PC-9 (cell line): ENCODE measurements at regions of chr17 and their contacts with region 1.

Region 1: GRCh38 chr17:3647769-3648555 is 11.4 kb downstream of the CTNS start:
- DNase-seq: peak in 1 of 2 experiments; percentile 40
- H3K4me3 ChIP-seq: no peak overlapping the region
- H3K27ac ChIP-seq: no peak overlapping the region
- H3K4me1 ChIP-seq: no peaks in the 10 kb centered on the region
- H3K27me3 ChIP-seq: no peaks in the 10 kb centered on the region
- CTCF ChIP-seq: peak; percentile 63

Region 2: DNA sequence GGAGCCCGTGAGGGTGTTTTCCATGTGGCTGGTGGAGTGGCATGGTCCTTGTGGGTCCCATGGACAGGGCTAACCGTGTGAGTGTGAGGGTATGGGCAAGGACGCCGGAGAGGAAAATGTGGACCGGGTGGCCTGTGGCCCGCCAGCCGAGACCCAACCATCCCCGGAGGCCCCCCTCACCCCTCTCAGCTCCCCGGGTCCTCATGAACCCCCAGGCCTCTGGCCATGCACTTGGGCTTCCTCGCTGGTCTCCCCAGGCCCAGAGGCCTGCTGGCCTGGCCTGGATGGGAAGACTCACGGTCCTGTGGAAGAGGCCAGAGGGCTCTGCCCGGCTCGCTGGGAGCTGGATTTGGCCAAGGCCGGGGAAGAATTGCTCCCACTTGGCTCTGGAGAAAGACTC is 838.6 kb before region 1 on chr17:
- CTCF ChIA-PET with region 1: interaction called, 11 read pairs
- POLR2A ChIA-PET with region 1: no interaction called
- intact Hi-C with region 1: no loop called
- DNase-seq: no peak
- H3K4me3 ChIP-seq: no peak overlapping the region
- H3K27ac ChIP-seq: no peak overlapping the region
- H3K4me1 ChIP-seq: peaks cover 11% of the 10 kb centered on the region
- H3K27me3 ChIP-seq: no peaks in the 10 kb centered on the region
- CTCF ChIP-seq: no peak

Region 3: DNA sequence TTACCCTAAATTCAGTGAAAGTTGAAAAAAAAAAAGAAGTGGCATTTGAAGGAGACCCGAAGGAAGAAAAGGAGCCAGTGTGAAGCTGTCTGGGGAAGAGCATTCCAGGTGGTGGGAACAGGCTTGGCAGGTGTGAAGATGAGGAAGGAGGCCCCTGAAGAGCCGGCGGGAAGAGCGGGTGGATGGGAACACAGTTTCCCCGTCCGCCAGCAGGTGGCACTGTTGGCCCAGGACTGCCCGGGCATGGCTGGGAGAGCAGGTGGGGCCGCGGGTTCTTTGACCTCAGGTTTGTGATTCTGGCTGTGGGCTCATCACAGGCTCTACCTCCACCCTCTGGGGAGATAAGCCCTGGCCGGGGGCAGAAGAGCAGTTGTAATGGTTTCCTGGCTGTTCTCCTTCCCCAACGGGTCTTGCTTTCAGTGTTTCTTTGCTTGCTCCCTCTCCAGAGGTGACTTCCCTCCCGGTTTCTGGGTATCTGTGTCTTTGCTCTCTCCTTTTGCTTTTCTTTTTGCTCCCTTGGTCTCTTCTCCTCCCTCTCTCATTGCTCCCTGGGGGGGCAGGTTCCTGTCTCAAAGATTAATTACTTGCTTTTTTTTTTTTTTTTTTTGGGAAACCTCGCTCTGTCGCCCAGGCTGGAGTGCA is 819.4 kb before region 1 on chr17:
- CTCF ChIA-PET with region 1: no interaction called
- POLR2A ChIA-PET with region 1: no interaction called
- intact Hi-C with region 1: loop called (anchors 2 kb)
- DNase-seq: peak in 1 of 2 experiments; percentile 85
- H3K4me3 ChIP-seq: no peak overlapping the region
- H3K27ac ChIP-seq: no peak overlapping the region
- H3K4me1 ChIP-seq: no peaks in the 10 kb centered on the region
- H3K27me3 ChIP-seq: 0 out of 2 replicates have a peak, but pooled peaks cover 3% of the 10 kb centered on the region
- CTCF ChIP-seq: peak; percentile 93

Region 4: DNA sequence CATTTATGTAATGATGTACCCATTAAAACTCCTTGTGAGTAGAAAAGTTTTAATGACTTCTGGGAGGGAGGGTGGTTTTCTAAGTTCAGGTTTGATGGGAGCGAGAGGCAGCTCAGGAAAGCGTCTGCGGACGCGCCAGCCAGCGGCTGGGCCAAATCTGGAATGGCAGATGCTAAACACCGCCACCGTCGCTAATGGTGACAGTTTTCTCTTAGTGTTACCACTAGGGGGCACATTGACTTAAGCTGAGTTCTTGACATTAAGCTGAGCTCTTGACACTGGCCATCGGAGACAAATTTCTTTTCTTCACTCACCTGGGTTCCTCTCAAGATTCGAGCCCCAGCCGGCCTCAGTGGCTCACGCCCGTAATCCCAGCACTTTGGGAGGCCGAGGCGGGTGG is 45.5 kb before region 1 on chr17:
- CTCF ChIA-PET with region 1: interaction called, 20 read pairs
- POLR2A ChIA-PET with region 1: no interaction called
- intact Hi-C with region 1: no loop called
- DNase-seq: no peak
- H3K4me3 ChIP-seq: no peak overlapping the region
- H3K27ac ChIP-seq: no peak overlapping the region
- H3K4me1 ChIP-seq: peaks cover 13% of the 10 kb centered on the region
- H3K27me3 ChIP-seq: no peaks in the 10 kb centered on the region
- CTCF ChIP-seq: peak; percentile 57